GM12878 (cell line): ENCODE measurements at regions of chr6 and their contacts with region 1.

Region 1: DNA sequence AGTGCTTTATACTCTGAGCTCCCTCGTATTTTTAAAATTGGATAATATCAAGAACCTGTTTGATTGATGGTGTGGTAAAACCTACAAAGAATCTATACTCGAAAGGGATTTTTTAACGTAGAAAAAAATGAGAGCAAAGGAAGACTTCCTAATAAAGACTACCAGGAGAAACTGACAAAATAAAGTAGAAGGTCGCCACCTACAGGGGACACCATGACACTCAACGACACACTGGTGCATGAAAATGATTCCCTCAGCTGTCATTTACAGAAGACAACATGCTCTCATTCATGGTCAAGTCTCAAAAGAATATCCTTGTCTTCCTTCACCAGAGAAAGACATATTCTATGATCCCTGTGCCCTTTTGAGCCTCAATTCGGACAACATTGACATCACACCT is 10.1 kb upstream of the NHSL1 start:
- DNase-seq: no peak
- ATAC-seq: peak; percentile 89
- H3K4me3 ChIP-seq: no peak overlapping the region
- H3K27ac ChIP-seq: no peak overlapping the region
- H3K4me1 ChIP-seq: no peaks in the 10 kb centered on the region
- H3K27me3 ChIP-seq: no peaks in the 10 kb centered on the region
- CTCF ChIP-seq: peak; percentile 45 to 83 (median 55); a peak in 4 of 6 replicates
- EP300 ChIP-seq: no peak
- POLR2A ChIP-seq: no peak
- RAD21 ChIP-seq: peak; percentile 69

Region 2: GRCh38 chr6:138307816-138308728 is 201.3 kb before region 1 on chr6:
- CTCF ChIA-PET with region 1: no interaction called
- POLR2A ChIA-PET with region 1: no interaction called
- RAD21 ChIA-PET with region 1: no interaction called
- SMC1A ChIA-PET with region 1: no interaction called
- in situ Hi-C with region 1: no loop called
- intact Hi-C with region 1: loop called (anchors 10 kb)
- DNase-seq: no peak
- ATAC-seq: no peak
- H3K4me3 ChIP-seq: no peak overlapping the region
- H3K27ac ChIP-seq: no peak overlapping the region
- H3K4me1 ChIP-seq: no peaks in the 10 kb centered on the region
- H3K27me3 ChIP-seq: peaks cover 0 to 4% of the 10 kb centered on the region in 2 experiments; a peak in 3 of 4 replicates
- CTCF ChIP-seq: no peak
- EP300 ChIP-seq: no peak
- POLR2A ChIP-seq: no peak
- RAD21 ChIP-seq: no peak

Region 3: GRCh38 chr6:138428944-138429598 is 80.3 kb before region 1 on chr6:
- CTCF ChIA-PET with region 1: interaction called, 387 read pairs
- POLR2A ChIA-PET with region 1: interaction called, 6 read pairs
- RAD21 ChIA-PET with region 1: interaction called, 202 read pairs
- SMC1A ChIA-PET with region 1: interaction called, 234 read pairs
- in situ Hi-C with region 1: loop called (anchors 5 kb)
- intact Hi-C with region 1: loop called (anchors 1 kb)
- DNase-seq: no peak
- ATAC-seq: peak; percentile 80
- H3K4me3 ChIP-seq: no peak overlapping the region
- H3K27ac ChIP-seq: no peak overlapping the region
- H3K4me1 ChIP-seq: no peaks in the 10 kb centered on the region
- H3K27me3 ChIP-seq: no peaks in the 10 kb centered on the region
- CTCF ChIP-seq: peak; percentile 38 to 69 (median 55); a peak in 5 of 6 replicates
- EP300 ChIP-seq: no peak
- POLR2A ChIP-seq: no peak
- RAD21 ChIP-seq: peak; percentile 81

Region 4: GRCh38 chr6:138450445-138450844 is 58.9 kb before region 1 on chr6:
- CTCF ChIA-PET with region 1: interaction called, 99 read pairs
- POLR2A ChIA-PET with region 1: interaction called, 3 read pairs
- RAD21 ChIA-PET with region 1: interaction called, 29 read pairs
- SMC1A ChIA-PET with region 1: interaction called, 59 read pairs
- in situ Hi-C with region 1: no loop called
- intact Hi-C with region 1: no loop called
- DNase-seq: peak; percentile 23
- ATAC-seq: peak; percentile 81
- H3K4me3 ChIP-seq: no peak overlapping the region
- H3K27ac ChIP-seq: no peak overlapping the region
- H3K4me1 ChIP-seq: peaks cover 9% of the 10 kb centered on the region
- H3K27me3 ChIP-seq: no peaks in the 10 kb centered on the region
- CTCF ChIP-seq: no peak
- EP300 ChIP-seq: peak; percentile 22 to 46; a peak in 2 of 4 replicates
- POLR2A ChIP-seq: no peak
- RAD21 ChIP-seq: no peak

Region 5: GRCh38 chr6:138485005-138485545 is 24.3 kb before region 1 on chr6:
- CTCF ChIA-PET with region 1: interaction called, 10 read pairs
- POLR2A ChIA-PET with region 1: interaction called, 5 read pairs
- RAD21 ChIA-PET with region 1: interaction called, 14 read pairs
- SMC1A ChIA-PET with region 1: interaction called, 21 read pairs
- in situ Hi-C with region 1: no loop called
- intact Hi-C with region 1: no loop called
- DNase-seq: no peak
- ATAC-seq: no peak
- H3K4me3 ChIP-seq: no peak overlapping the region
- H3K27ac ChIP-seq: no peak overlapping the region
- H3K4me1 ChIP-seq: no peaks in the 10 kb centered on the region
- H3K27me3 ChIP-seq: no peaks in the 10 kb centered on the region; a peak in 1 of 4 replicates
- CTCF ChIP-seq: no peak
- EP300 ChIP-seq: no peak
- POLR2A ChIP-seq: no peak
- RAD21 ChIP-seq: no peak

Region 6: GRCh38 chr6:138765896-138766655 is 256.7 kb after region 1 on chr6:
- CTCF ChIA-PET with region 1: interaction called, 35 read pairs
- POLR2A ChIA-PET with region 1: no interaction called
- RAD21 ChIA-PET with region 1: interaction called, 14 read pairs
- SMC1A ChIA-PET with region 1: interaction called, 29 read pairs
- in situ Hi-C with region 1: no loop called
- intact Hi-C with region 1: loop called (anchors 10 kb)
- DNase-seq: no peak
- ATAC-seq: 0 out of 3 replicates have a peak, but pooled peaks have one; percentile 17
- H3K4me3 ChIP-seq: no peak overlapping the region
- H3K27ac ChIP-seq: no peak overlapping the region
- H3K4me1 ChIP-seq: peaks cover 12% of the 10 kb centered on the region
- H3K27me3 ChIP-seq: no peaks in the 10 kb centered on the region
- CTCF ChIP-seq: peak; percentile 39 to 64 (median 50); a peak in 5 of 6 replicates
- EP300 ChIP-seq: no peak
- POLR2A ChIP-seq: no peak
- RAD21 ChIP-seq: peak; percentile 78